Transverse colon (tissue), 4 donors: ENCODE measurements at regions of chrX and their contacts with region 1.

Region 1: GRCh38 chrX:37717708-37718107 is 32.1 kb downstream of the XK start:
- DNase-seq: no peak
- H3K4me3 ChIP-seq: no peak overlapping the region
- H3K27ac ChIP-seq: no peak overlapping the region
- H3K4me1 ChIP-seq: no peaks in the 10 kb centered on the region
- H3K27me3 ChIP-seq: no peaks in the 10 kb centered on the region
- CTCF ChIP-seq: no peak
- EP300 ChIP-seq: no peak
- POLR2A ChIP-seq: no peak

Region 2: GRCh38 chrX:37860721-37861120 is 143.0 kb after region 1 on chrX:
- in situ Hi-C with region 1: no loop called
- intact Hi-C with region 1: no loop called
- DNase-seq: no peak
- H3K4me3 ChIP-seq: no peak overlapping the region
- H3K27ac ChIP-seq: no peak overlapping the region
- H3K4me1 ChIP-seq: no peaks in the 10 kb centered on the region
- H3K27me3 ChIP-seq: no peaks in the 10 kb centered on the region
- CTCF ChIP-seq: no peak
- EP300 ChIP-seq: no peak
- POLR2A ChIP-seq: no peak

Region 3: GRCh38 chrX:37976153-37976552 is 258.4 kb after region 1 on chrX:
- in situ Hi-C with region 1: no loop called
- intact Hi-C with region 1: loop called (anchors 5 kb)
- DNase-seq: no peak
- H3K4me3 ChIP-seq: no peak overlapping the region
- H3K27ac ChIP-seq: no peak overlapping the region
- H3K4me1 ChIP-seq: peaks cover 0 to 2% (median 0%) of the 10 kb centered on the region in 4 donors
- H3K27me3 ChIP-seq: no peaks in the 10 kb centered on the region
- CTCF ChIP-seq: no peak
- EP300 ChIP-seq: no peak
- POLR2A ChIP-seq: no peak